ENCODE measurements at regions of chr5 and their contacts with region 1.

Region 1: GRCh38 chr5:163347671-163348070 is 89.7 kb upstream of the CCNG1 start:
- DNase-seq: no peak
- H3K4me3 ChIP-seq: no peak overlapping the region
- H3K27ac ChIP-seq: no peak overlapping the region
- H3K4me1 ChIP-seq: no peaks in the 10 kb centered on the region
- H3K27me3 ChIP-seq: no peaks in the 10 kb centered on the region
- CTCF ChIP-seq: peak in 3 of 4 experiments; percentile 45 to 72 (median 58)
- EP300 ChIP-seq: no peak
- POLR2A ChIP-seq: no peak

Region 2: DNA sequence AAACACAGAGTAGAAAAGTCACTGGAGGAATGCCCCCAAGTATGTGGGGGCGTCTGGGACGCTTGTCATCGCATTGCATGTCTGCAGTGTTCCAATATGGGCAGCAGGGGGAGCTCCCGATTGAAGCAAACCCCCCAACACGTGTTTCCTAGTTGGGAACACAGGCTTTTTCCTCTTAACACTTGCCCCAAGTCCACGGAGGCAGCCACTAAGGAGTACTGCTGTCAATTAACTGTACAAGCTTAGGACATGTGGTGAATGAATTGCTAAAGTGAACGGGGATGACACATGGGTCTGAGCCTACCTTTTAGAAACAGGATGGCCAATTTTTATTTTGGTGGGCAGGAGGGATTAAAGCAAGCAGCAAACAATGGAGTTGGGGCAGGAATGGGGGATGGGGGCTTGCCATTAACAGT is 1803.3 kb before region 1 on chr5:
- intact Hi-C with region 1: loop called (anchors 5 kb)
- DNase-seq: no peak
- H3K4me3 ChIP-seq: no peak overlapping the region
- H3K27ac ChIP-seq: no peak overlapping the region
- H3K4me1 ChIP-seq: peaks cover 0 to 35% (median 26%) of the 10 kb centered on the region in 4 donors
- H3K27me3 ChIP-seq: peaks cover 20 to 60% (median 20%) of the 10 kb centered on the region in 3 donors
- CTCF ChIP-seq: peak in 3 of 4 experiments; percentile 29 to 70 (median 56)
- EP300 ChIP-seq: no peak
- POLR2A ChIP-seq: no peak

Region 3: DNA sequence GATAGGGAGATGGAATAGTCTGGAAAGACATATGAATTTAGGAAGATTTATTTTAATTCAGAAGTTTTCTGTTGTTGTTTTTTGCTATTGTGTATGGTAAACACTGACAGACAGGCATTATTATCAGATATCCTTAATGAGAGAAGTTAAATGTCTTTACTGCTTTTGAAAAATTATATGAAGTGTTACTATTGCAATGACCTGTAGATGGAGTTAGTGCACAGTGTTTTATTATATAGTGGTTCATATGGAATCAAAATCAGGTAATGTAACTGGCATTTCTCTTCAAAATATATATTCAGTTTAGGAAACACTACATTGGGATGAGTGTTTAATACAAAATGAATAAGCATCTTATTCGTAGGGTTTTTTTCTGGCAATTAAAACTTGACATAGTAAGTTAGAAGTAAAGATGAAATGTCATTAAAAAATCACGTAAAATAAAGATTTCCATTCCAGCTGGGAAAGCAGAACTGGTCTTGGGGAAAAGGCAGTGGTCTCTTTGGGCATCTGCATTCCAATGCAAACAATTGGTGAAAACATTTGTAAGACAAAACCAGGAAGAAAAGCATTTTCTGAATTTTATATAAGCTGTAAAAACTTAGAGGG is 1495.9 kb before region 1 on chr5:
- intact Hi-C with region 1: loop called (anchors 10 kb)
- DNase-seq: no peak
- H3K4me3 ChIP-seq: no peak overlapping the region
- H3K27ac ChIP-seq: no peak overlapping the region
- H3K4me1 ChIP-seq: peaks cover 0 to 16% (median 5%) of the 10 kb centered on the region in 4 donors
- H3K27me3 ChIP-seq: peaks cover 0 to 45% (median 2%) of the 10 kb centered on the region in 3 donors
- CTCF ChIP-seq: no peak
- EP300 ChIP-seq: no peak
- POLR2A ChIP-seq: no peak

Region 4: DNA sequence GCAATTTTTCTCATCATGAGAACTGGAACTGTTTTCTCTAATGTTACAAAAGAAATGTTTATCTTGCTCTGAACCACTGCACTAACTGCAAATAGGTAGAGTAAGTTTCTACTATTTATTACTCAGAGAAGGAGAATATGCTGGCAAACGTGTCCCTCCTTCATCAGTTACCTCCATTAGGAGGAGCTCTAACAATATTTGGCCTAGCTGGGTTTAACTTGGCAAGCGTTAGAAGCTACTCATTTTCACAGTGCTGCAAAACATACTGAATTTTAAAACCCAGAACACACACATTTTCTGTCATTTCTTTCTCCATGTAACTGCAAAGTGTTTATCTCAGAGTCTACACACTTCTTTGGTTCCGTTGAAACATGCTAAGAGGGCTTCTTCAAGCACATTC is 1381.1 kb before region 1 on chr5:
- intact Hi-C with region 1: loop called (anchors 10 kb)
- DNase-seq: no peak
- H3K4me3 ChIP-seq: no peak overlapping the region
- H3K27ac ChIP-seq: no peak overlapping the region
- H3K4me1 ChIP-seq: no peaks in the 10 kb centered on the region
- H3K27me3 ChIP-seq: no peaks in the 10 kb centered on the region
- CTCF ChIP-seq: peak in 1 of 4 experiments; percentile 24
- EP300 ChIP-seq: no peak
- POLR2A ChIP-seq: no peak

Measured in sigmoid colon (tissue), 7 donors.